A549 (cell line): ENCODE measurements at regions of chr22 and their contacts with region 1.

Region 1: GRCh38 chr22:40645579-40646197 is 9.2 kb upstream of the MRTFA start:
- DNase-seq: no peak
- ATAC-seq: no peak
- H3K4me3 ChIP-seq: no peak overlapping the region
- H3K27ac ChIP-seq: peak overlapping the region; percentile 82
- H3K4me1 ChIP-seq: peaks cover 25% of the 10 kb centered on the region
- CTCF ChIP-seq: no peak
- EP300 ChIP-seq: no peak
- POLR2A ChIP-seq: no peak
- RAD21 ChIP-seq: no peak

Region 2: GRCh38 chr22:40436505-40437451 is 208.9 kb before region 1 on chr22:
- CTCF ChIA-PET with region 1: interaction called, 70 read pairs
- POLR2A ChIA-PET with region 1: no interaction called
- DNase-seq: peak; percentile 29 to 70
- ATAC-seq: peak; percentile 74 to 79; a peak in 5 of 6 replicates
- H3K4me3 ChIP-seq: no peak overlapping the region
- H3K27ac ChIP-seq: peak overlapping the region; percentile 81 to 83
- H3K4me1 ChIP-seq: peaks cover 41% of the 10 kb centered on the region
- CTCF ChIP-seq: peak; percentile 68
- EP300 ChIP-seq: no peak
- POLR2A ChIP-seq: no peak
- RAD21 ChIP-seq: peak; percentile 57 to 75

Region 3: DNA sequence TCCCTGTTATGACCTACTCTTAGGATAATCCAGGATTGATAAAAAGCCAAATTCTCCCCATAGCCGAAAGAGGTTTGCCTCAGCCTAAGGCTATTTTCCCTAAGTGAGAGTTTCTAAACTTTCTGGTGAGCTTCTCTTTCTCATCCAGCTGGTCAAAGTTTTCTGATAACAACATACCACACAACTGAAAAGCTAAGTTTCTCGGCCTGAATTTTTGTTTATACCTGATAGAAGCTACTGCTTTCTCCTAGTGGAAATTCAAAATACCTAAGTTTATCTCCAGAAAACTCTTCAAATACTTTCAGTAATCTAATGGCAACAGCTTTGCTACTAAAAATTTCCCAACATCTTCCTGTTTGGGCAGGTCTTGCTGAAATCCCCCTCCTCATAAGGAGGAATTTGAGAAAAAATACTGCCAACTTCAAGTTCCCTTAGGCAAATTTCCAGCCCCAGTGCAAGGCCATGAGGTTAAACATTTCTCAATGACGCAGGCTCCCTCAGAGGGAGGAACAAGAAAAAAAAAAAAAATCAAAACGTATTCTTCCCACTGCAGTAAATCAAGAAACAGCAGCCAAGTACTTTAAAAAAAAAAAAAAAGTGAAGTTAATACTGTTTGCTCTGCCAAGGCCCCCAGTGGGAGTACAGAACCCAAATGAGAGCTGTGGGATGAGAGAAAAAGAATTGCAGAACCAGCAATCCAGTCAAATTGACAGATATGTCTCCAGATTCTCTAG is 136.1 kb before region 1 on chr22:
- CTCF ChIA-PET with region 1: interaction called, 15 read pairs
- POLR2A ChIA-PET with region 1: interaction called, 11 read pairs
- DNase-seq: peak in 1 of 2 experiments; percentile 94
- ATAC-seq: peak; percentile 41 to 61; a peak in 5 of 6 replicates
- H3K4me3 ChIP-seq: no peak overlapping the region; the same call in 2 of the 3 replicates
- H3K27ac ChIP-seq: peak overlapping the region; percentile 94 to 99
- H3K4me1 ChIP-seq: peaks cover 92% of the 10 kb centered on the region
- CTCF ChIP-seq: no peak
- EP300 ChIP-seq: peak; percentile 91 to 96; a peak in 4 of 5 replicates
- POLR2A ChIP-seq: no peak
- RAD21 ChIP-seq: peak; percentile 2 to 6; a peak in 3 of 5 replicates

Region 4: GRCh38 chr22:40525249-40525884 is 120.3 kb before region 1 on chr22:
- CTCF ChIA-PET with region 1: interaction called, 87 read pairs
- POLR2A ChIA-PET with region 1: interaction called, 4 read pairs
- DNase-seq: peak in 1 of 2 experiments; percentile 65
- ATAC-seq: peak; percentile 39 to 75; a peak in 3 of 6 replicates
- H3K4me3 ChIP-seq: no peak overlapping the region
- H3K27ac ChIP-seq: peak overlapping the region; percentile 68 to 85
- H3K4me1 ChIP-seq: peaks cover 78% of the 10 kb centered on the region
- CTCF ChIP-seq: peak; percentile 65
- EP300 ChIP-seq: no peak
- POLR2A ChIP-seq: no peak
- RAD21 ChIP-seq: peak; percentile 42 to 55